Heart left ventricle (tissue), 16 donors: ENCODE measurements at regions of chr1 and their contacts with region 1.

Region 1: DNA sequence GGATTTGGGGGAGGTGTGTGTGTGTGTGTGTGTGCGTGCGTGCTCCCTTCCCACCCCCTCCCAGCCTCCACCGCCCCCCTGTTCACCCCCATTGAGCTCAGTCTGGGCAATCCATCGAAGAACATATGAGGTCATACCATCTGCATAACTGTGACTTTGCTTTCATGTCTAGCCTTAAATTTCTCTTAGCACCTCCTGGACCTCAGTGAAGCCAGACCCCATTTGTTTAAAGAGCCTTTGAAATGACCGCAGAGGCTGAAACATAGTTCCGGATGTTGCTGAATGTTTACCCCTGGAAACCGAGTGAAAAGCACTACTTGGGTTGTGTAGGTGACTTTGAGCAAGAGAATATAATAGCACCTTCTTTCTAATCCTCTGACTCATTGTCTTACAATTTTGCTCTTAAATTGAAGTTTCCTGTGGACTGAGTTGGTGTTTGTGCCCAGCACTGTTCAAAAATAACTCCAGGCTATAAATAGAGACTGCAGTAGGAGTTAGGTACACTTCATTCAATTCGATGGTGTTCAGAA is 75.4 kb downstream of the UBE4B start:
- DNase-seq: no peak
- ATAC-seq: peak; percentile 53 to 80 (median 72)
- H3K4me3 ChIP-seq: peak overlapping the region in 5 of 12 donors; percentile 1 to 18 (median 9)
- H3K27ac ChIP-seq: peak overlapping the region; percentile 38 to 93 (median 80)
- H3K4me1 ChIP-seq: peaks cover 0 to 33% (median 10%) of the 10 kb centered on the region in 12 donors
- H3K27me3 ChIP-seq: no peaks in the 10 kb centered on the region
- CTCF ChIP-seq: no peak
- POLR2A ChIP-seq: no peak

Region 2: DNA sequence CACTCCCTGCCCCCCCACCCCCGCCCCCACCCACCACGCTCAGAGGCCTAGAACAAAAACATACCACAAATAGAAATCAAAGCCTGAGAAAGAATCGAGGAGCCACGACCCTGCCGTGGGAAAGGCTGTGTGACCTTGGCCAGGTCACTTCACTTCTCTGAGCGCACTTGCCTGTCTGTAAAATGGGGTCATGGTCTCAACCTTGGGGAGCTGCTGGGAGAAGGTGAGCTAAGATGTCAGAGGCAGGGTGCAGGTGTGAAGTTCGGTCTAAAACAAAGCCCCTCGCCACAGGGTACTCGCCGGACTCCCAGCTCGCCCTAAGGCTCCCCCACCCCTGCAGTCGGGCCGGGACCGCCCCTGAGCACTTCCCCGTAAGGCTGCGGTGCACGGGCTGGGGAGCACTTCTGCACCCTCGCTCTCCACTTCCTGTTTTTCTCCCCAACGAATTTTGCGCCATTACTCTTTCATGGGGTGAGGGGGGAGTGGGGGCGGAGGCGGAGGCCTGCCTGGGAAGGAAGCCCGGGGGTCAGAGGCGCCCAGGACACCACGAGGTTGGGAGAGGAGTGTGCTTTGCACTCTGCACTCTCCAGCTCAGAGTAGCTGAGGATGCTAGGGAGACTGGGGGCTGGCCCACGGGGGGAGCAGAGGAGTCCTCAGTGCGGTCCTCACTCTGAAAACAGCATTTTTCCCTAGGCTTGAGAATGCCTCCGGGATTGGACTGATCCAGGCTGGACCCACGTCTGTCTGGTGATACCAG is 478.6 kb before region 1 on chr1:
- intact Hi-C with region 1: no loop called
- DNase-seq: peak; percentile 58 to 87 (median 69)
- ATAC-seq: peak; percentile 42 to 71 (median 54)
- H3K4me3 ChIP-seq: peak overlapping the region in 2 of 12 donors; percentile 26 to 54
- H3K27ac ChIP-seq: peak overlapping the region in 2 of 12 donors; percentile 13 to 85
- H3K4me1 ChIP-seq: peaks cover 0 to 62% (median 0%) of the 10 kb centered on the region in 12 donors
- H3K27me3 ChIP-seq: peaks cover 0 to 17% (median 0%) of the 10 kb centered on the region in 9 donors
- CTCF ChIP-seq: no peak
- POLR2A ChIP-seq: no peak

Region 3: DNA sequence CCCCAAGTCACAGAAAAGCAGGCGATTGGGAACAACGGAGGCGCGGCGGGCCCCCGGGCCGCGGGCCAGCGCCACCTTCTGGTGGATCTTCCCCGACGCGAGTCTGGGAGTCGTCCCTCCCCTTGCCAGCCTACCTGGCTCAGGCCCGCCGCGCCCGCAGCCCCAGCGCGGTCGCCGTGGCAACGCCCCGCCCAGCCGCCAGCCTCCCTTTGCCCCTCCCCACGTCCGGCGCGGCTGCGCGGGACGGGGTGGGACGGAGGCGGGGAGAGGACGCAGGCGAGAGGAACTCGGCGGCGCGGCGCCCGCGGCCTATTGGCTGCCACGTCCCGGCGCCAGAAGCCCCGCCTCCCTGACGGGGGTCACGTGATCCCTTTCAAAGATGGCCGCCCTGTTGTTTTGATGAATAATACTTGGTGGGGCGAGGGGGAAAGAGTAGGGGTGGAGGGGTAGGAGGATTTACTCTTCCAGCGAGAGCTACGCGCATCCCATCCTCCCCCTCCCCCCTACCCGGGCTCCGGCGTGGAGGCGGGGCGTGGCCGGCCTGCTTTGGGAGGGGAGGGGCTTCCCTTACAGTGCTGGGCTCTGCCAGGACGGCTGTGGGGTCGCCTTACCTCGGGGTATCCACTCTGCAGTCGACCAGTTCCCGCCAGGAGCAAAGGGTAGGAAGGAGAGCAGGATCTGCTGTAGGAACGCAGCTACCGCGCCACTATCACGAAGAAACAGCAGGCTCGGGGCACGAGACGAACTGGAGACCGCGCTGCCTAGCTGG is 75.4 kb before region 1 on chr1 and contains the start of gene UBE4B:
- intact Hi-C with region 1: loop called in 2 of 10 experiments (anchors 2 to 5 kb)
- DNase-seq: peak; percentile 97 to 99 (median 98)
- ATAC-seq: peak; percentile 99 to 100 (median 99)
- H3K4me3 ChIP-seq: peak within 1 kb of the TSS; percentile 73 to 100 (median 90)
- H3K27ac ChIP-seq: peak within 1 kb of the TSS; percentile 65 to 99 (median 95)
- H3K4me1 ChIP-seq: peaks cover 0 to 38% (median 19%) of the 10 kb centered on the region in 12 donors
- H3K27me3 ChIP-seq: no peaks in the 10 kb centered on the region
- CTCF ChIP-seq: peak; percentile 73 to 95 (median 90)
- POLR2A ChIP-seq: peak in 1 of 2 donors; percentile 34
- total RNA-seq, gene UBE4B: 50.4 to 132 (median 68.2) TPM

Region 4: DNA sequence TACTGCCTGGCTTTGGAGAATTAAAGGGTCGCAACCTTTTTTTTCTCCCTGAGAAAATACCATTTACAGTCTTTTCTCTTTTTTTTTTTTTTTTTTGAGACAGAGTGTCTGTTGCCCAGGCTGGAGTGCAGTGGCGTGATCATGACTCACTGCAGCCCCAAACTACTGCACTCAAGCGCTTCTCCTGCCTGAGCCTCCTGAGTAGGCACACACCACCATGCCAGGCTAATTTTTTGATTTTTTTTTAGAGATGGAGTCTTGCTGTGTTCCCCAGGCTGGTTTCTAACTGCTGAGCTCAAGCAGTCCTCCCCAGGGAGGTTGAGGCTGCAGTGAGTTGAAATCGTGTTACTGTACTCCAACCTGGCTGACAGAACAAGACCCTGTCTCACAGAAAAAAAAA is 50.9 kb before region 1 on chr1:
- intact Hi-C with region 1: loop called in 1 of 10 experiments (anchors 10 kb)
- DNase-seq: no peak
- ATAC-seq: peak in 3 of 4 donors; percentile 35 to 71 (median 59)
- H3K4me3 ChIP-seq: no peak overlapping the region
- H3K27ac ChIP-seq: peak overlapping the region in 9 of 12 donors; percentile 4 to 62 (median 20)
- H3K4me1 ChIP-seq: peaks cover 2 to 57% (median 33%) of the 10 kb centered on the region in 12 donors
- H3K27me3 ChIP-seq: no peaks in the 10 kb centered on the region
- CTCF ChIP-seq: no peak
- POLR2A ChIP-seq: no peak

Region 5: DNA sequence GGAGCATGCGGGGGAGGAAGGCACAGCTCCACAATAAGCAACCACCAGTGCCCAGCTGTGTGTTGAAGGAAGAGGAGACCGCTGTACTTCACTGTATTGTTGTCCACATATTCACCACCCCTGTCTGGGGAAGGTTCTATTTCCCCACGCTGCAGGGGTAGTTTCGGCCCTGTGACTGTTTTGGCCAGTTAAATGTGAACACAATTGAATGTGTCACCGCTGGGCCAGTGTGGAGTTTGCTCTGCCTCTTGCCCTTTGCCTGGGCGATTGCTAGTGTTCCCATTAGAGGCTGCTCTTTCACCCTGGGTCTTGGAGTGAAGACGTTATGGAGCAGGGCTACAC is 42.9 kb before region 1 on chr1:
- intact Hi-C with region 1: loop called in 1 of 10 experiments (anchors 5 kb)
- DNase-seq: peak in 3 of 5 donors; percentile 16 to 50 (median 35)
- ATAC-seq: peak in 3 of 4 donors; percentile 45 to 61 (median 58)
- H3K4me3 ChIP-seq: no peak overlapping the region
- H3K27ac ChIP-seq: peak overlapping the region in 10 of 12 donors; percentile 0 to 93 (median 56)
- H3K4me1 ChIP-seq: peaks cover 6 to 65% (median 38%) of the 10 kb centered on the region in 12 donors
- H3K27me3 ChIP-seq: no peaks in the 10 kb centered on the region
- CTCF ChIP-seq: peak in 1 of 12 donors; percentile 8
- POLR2A ChIP-seq: no peak

Region 6: DNA sequence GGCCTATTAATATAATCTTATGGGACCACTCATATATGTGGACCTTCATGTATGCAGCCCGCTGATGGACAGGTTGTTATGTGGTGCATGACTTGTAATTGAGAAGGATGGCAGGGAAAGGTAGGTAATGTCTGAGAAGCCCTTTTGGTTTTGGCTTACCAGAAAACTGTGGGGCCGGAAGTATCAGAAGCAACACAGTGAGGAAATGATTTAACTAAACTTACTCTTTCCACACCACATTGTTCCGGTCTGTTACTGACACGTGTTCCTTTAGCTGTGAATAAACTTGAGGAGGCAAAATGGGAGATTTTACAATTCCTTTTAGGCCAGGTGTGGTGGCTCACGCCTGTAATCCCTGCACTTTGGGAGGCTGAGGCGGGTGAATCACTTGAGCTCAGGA is 134.6 kb after region 1 on chr1:
- intact Hi-C with region 1: no loop called
- DNase-seq: no peak
- ATAC-seq: peak in 2 of 4 donors; percentile 44 to 62
- H3K4me3 ChIP-seq: no peak overlapping the region
- H3K27ac ChIP-seq: no peak overlapping the region
- H3K4me1 ChIP-seq: peaks cover 0 to 39% (median 11%) of the 10 kb centered on the region in 12 donors
- H3K27me3 ChIP-seq: no peaks in the 10 kb centered on the region
- CTCF ChIP-seq: no peak
- POLR2A ChIP-seq: no peak